Activated CD8-positive, alpha-beta T cell treated with anti-CD3 and anti-CD28 coated beads for 36 hours (primary cell): ENCODE measurements at regions of chr12 and their contacts with region 1.

Region 1: DNA sequence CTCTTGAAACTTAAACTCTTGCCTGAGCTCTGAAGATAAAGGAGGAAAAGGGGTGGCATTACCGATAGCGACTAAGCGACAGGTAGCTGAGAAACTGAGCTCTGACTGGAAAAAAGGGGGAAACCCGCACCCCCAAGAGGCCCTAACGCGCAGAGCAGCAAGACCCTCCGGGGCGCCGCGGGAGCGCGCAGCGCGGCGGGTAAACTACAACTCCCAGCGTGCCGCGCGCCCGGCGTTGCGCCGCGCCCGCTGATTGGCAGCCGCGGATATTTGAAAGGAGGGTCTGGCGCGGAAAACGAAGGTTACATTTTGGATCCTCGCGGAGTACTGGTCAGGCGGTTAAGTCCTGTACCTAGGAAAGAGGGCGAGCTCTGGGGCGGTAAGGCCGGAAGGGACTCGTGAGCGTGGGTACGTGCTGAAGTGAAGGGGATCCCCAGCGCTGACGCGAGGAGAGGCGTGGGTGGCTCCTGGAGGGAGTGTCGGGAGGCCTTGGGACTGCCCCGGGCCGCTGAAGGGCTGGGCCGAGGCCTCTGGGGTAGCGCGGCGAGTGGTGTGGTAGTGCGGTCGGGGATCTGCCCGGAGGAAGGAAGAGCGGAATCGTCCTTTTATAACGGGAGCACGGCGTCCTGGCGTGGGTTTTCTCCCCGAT is at the start of gene ESPL1:
- DNase-seq: peak; percentile 95
- ATAC-seq: peak; percentile 89
- H3K4me3 Mint-ChIP-seq: peak within 1 kb of the TSS; percentile 94
- H3K27ac Mint-ChIP-seq: peak within 1 kb of the TSS; percentile 97
- H3K4me1 Mint-ChIP-seq: peaks cover 33% of the 10 kb centered on the region
- H3K27me3 Mint-ChIP-seq: no peaks in the 10 kb centered on the region
- CTCF ChIP-seq: peak; percentile 56
- total RNA-seq, gene ESPL1: 62.1 to 63.4 TPM

Region 2: GRCh38 chr12:53031617-53032016 is 236.5 kb before region 1 on chr12:
- CTCF ChIA-PET with region 1: no interaction called
- POLR2A ChIA-PET with region 1: no interaction called
- intact Hi-C with region 1: no loop called
- DNase-seq: no peak
- ATAC-seq: no peak
- H3K4me3 Mint-ChIP-seq: no peak overlapping the region
- H3K27ac Mint-ChIP-seq: no peak overlapping the region
- H3K4me1 Mint-ChIP-seq: peaks cover 13% of the 10 kb centered on the region
- H3K27me3 Mint-ChIP-seq: no peaks in the 10 kb centered on the region
- CTCF ChIP-seq: no peak

Region 3: DNA sequence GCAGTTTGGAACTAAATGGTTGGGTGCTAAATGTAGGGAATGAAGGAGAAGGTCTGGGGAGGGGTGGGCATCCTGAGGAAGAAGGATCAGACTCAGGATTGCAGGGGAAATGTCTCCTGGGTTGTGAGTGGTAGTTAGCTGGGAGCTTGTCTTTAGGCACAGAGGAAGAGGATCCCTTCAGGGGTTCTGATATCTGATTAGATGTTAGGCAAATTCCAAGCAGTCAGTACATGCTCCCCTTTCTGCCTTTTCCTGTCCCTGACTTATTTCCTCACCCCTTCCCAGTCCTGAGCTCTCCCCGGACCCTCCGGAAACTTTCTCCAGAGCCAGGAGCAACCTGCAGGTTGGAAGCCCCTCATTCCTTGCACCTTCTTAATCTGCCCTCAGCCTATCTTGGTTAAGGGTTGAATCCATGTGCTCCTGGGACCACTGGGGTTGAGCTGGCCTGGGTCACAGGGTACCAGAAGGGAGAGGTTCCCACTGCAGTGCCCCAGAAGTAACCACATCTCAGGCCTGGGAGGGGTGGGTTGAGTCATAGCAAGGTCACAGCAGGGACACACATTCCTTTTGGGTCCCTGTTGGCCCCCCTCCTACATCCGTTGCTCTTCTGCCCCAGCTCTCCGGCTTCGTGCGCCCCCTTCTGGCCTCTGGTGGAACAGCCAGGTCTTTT is 169.0 kb before region 1 on chr12:
- CTCF ChIA-PET with region 1: interaction called, 13 read pairs
- POLR2A ChIA-PET with region 1: interaction called, 3 read pairs
- intact Hi-C with region 1: no loop called
- DNase-seq: peak; percentile 97
- ATAC-seq: peak; percentile 52
- H3K4me3 Mint-ChIP-seq: peak overlapping the region; percentile 69
- H3K27ac Mint-ChIP-seq: peak overlapping the region; percentile 86
- H3K4me1 Mint-ChIP-seq: peaks cover 51% of the 10 kb centered on the region
- H3K27me3 Mint-ChIP-seq: peaks cover 2% of the 10 kb centered on the region
- CTCF ChIP-seq: peak; percentile 93

Region 4: DNA sequence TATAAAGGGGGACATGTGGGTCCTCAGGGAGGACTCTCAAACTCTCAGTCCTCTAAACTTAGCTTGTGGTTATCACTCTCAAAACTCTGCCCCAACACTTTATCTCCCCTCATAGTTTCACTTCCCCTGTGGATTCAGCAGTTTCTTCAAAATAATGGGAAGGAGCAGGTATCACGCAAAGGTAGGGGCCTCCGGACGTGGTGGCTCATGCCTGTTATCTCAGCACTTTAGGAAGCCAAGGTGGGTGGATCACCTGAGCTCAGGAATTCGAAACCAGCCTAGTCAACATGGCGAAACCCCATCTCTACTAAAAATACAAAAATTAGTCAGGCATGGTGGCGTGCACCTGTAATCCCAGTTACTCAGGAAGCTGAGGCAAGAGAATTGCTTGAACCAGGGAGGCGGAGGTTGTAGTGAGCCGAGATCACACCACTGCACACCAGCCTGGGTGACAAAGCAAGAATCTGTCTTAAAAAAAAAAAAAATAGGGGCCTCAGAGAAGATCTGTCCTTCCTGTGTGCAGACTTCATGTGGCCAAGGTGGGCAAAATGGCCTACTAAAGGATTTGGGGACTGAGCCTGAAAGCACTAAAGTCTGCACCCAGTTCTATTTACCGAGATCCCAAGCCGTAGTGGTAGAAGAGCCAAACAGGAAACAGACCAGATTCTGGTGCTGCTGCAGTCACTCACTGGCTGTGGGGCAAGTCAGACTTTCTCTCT is 67.5 kb before region 1 on chr12:
- CTCF ChIA-PET with region 1: interaction called, 18 read pairs
- POLR2A ChIA-PET with region 1: interaction called, 17 read pairs
- intact Hi-C with region 1: no loop called
- DNase-seq: peak; percentile 64
- ATAC-seq: peak; percentile 41
- H3K4me3 Mint-ChIP-seq: peak overlapping the region; percentile 43
- H3K27ac Mint-ChIP-seq: peak overlapping the region; percentile 83
- H3K4me1 Mint-ChIP-seq: peaks cover 70% of the 10 kb centered on the region
- H3K27me3 Mint-ChIP-seq: no peaks in the 10 kb centered on the region
- CTCF ChIP-seq: no peak

Region 5: GRCh38 chr12:53220801-53221202 is 47.3 kb before region 1 on chr12:
- CTCF ChIA-PET with region 1: interaction called, 213 read pairs
- POLR2A ChIA-PET with region 1: interaction called, 38 read pairs
- intact Hi-C with region 1: no loop called
- DNase-seq: peak; percentile 92
- ATAC-seq: peak; percentile 65
- H3K4me3 Mint-ChIP-seq: peak overlapping the region; percentile 92
- H3K27ac Mint-ChIP-seq: peak overlapping the region; percentile 96
- H3K4me1 Mint-ChIP-seq: peaks cover 74% of the 10 kb centered on the region
- H3K27me3 Mint-ChIP-seq: no peaks in the 10 kb centered on the region
- CTCF ChIP-seq: no peak

Region 6: DNA sequence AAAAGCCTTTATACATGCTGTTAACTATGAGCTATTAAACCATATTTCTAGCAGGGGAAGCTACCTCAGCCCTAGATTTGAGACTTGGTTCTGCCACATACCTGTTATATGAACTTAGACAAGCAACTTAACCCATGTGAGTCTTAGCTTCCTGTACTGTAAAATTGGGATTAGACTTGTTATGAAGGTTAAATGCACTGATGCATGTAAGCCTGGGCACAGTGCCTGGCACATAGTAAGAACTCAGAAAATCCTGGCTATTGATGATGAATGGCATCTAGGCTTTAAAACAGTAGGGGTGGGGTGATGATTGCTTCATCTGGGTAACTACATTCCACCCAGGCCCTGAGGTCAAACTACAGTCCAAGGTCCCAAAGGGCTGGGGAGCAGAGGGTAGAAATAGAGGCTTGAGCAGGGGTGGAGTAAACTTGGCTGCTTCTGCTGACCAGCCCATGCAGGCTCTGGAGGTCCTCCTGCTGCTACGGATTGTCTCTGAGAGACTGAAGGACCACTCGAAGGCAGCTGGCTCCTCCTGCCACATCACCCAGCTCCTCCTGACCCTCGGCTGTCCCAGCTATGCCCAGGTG is 11.3 kb after region 1 on chr12:
- CTCF ChIA-PET with region 1: interaction called, 14 read pairs
- POLR2A ChIA-PET with region 1: interaction called, 25 read pairs
- intact Hi-C with region 1: no loop called
- DNase-seq: no peak
- ATAC-seq: no peak
- H3K4me3 Mint-ChIP-seq: no peak overlapping the region
- H3K27ac Mint-ChIP-seq: no peak overlapping the region
- H3K4me1 Mint-ChIP-seq: peaks cover 2% of the 10 kb centered on the region
- H3K27me3 Mint-ChIP-seq: no peaks in the 10 kb centered on the region
- CTCF ChIP-seq: no peak

Region 7: GRCh38 chr12:53344824-53345485 is 76.8 kb after region 1 on chr12:
- CTCF ChIA-PET with region 1: interaction called, 14 read pairs
- POLR2A ChIA-PET with region 1: interaction called, 3 read pairs
- intact Hi-C with region 1: no loop called
- DNase-seq: peak; percentile 85
- ATAC-seq: peak; percentile 86
- H3K4me3 Mint-ChIP-seq: peak overlapping the region; percentile 82
- H3K27ac Mint-ChIP-seq: peak overlapping the region; percentile 71
- H3K4me1 Mint-ChIP-seq: peaks cover 19% of the 10 kb centered on the region
- H3K27me3 Mint-ChIP-seq: peaks cover 3% of the 10 kb centered on the region
- CTCF ChIP-seq: peak; percentile 75

Region 8: GRCh38 chr12:53413485-53414204 is 145.5 kb after region 1 on chr12:
- CTCF ChIA-PET with region 1: no interaction called
- POLR2A ChIA-PET with region 1: no interaction called
- intact Hi-C with region 1: no loop called
- DNase-seq: no peak
- ATAC-seq: no peak
- H3K4me3 Mint-ChIP-seq: no peak overlapping the region
- H3K27ac Mint-ChIP-seq: peak overlapping the region; percentile 66
- H3K4me1 Mint-ChIP-seq: peaks cover 56% of the 10 kb centered on the region
- H3K27me3 Mint-ChIP-seq: no peaks in the 10 kb centered on the region
- CTCF ChIP-seq: no peak